Motor neuron (in vitro differentiated cells): ENCODE measurements at regions of chr12 and their contacts with region 1.

Region 1: GRCh38 chr12:12356886-12357718 is at the start of gene BORCS5:
- ATAC-seq: peak; percentile 83 to 96 (median 94)
- H3K4me3 ChIP-seq: peak within 1 kb of the TSS; percentile 62 to 93 (median 86)
- H3K27ac ChIP-seq: peak within 1 kb of the TSS; percentile 89 to 91
- H3K4me1 ChIP-seq: peaks cover 10 to 13% of the 10 kb centered on the region in 2 donors
- total RNA-seq, gene BORCS5: 7.7 to 28.2 (median 17.8) TPM

Region 2: GRCh38 chr12:11780521-11781101 is 576.5 kb before region 1 on chr12:
- in situ Hi-C with region 1: no loop called
- ATAC-seq: no peak
- H3K4me3 ChIP-seq: no peak overlapping the region
- H3K27ac ChIP-seq: no peak overlapping the region
- H3K4me1 ChIP-seq: peaks cover 24% of the 10 kb centered on the region in 2 donors

Region 3: GRCh38 chr12:12319451-12320183 is 37.5 kb before region 1 on chr12:
- in situ Hi-C with region 1: no loop called
- ATAC-seq: peak in 4 of 8 experiments; percentile 18 to 81 (median 36)
- H3K4me3 ChIP-seq: no peak overlapping the region
- H3K27ac ChIP-seq: no peak overlapping the region
- H3K4me1 ChIP-seq: peaks cover 6 to 11% of the 10 kb centered on the region in 2 donors

Region 4: DNA sequence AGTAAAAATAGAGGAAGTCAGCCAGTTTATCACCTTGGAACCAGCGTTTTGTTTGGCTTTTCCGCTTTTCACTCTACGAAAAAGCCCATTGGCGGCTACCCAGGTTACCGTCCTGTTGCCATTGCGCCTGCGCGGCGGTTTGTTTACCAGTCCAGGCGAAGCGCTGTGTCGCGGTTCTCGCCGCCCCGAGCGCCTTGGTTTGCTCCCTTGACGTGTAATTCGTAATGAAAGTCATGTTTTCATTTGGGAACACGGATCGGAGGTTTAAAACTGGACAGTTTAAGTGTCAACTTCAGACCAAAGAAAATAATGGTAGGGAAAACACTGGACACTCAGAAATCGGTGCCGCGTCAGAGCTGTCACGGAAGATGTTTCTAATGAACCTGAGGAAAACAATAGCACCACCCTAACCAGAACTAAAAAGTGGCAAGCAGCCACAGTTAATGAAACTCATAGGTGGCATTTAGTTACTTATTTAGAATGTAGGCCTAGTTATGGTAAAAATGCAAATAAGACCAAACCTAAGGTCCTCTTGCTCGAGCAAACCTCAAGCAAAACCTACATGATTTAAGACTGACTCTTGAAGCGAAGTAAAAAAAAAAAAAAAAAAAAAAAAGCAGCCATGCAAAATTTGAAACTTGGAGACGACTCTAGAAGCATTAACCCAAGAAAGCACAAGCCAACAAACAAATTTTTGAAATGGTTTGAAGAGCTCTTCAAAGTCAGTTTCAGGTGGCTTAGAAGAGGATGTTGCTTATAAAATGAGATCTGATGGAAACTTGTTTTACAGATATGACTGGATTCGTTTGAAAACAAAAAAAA is 339.7 kb after region 1 on chr12:
- in situ Hi-C with region 1: loop called in 3 of 9 experiments (anchors 25 kb)
- ATAC-seq: peak; percentile 89 to 98 (median 95)
- H3K4me3 ChIP-seq: peak overlapping the region; percentile 53 to 91 (median 84)
- H3K27ac ChIP-seq: peak overlapping the region; percentile 93
- H3K4me1 ChIP-seq: peaks cover 5 to 6% of the 10 kb centered on the region in 2 donors

Region 5: GRCh38 chr12:12724661-12725545 is 367.8 kb after region 1 on chr12:
- in situ Hi-C with region 1: loop called in 2 of 9 experiments (anchors 25 kb)
- ATAC-seq: peak; percentile 76 to 82 (median 78)
- H3K4me3 ChIP-seq: peak overlapping the region; percentile 57 to 77 (median 63)
- H3K27ac ChIP-seq: peak overlapping the region; percentile 92 to 95
- H3K4me1 ChIP-seq: peaks cover 0 to 2% of the 10 kb centered on the region in 2 donors

Region 6: DNA sequence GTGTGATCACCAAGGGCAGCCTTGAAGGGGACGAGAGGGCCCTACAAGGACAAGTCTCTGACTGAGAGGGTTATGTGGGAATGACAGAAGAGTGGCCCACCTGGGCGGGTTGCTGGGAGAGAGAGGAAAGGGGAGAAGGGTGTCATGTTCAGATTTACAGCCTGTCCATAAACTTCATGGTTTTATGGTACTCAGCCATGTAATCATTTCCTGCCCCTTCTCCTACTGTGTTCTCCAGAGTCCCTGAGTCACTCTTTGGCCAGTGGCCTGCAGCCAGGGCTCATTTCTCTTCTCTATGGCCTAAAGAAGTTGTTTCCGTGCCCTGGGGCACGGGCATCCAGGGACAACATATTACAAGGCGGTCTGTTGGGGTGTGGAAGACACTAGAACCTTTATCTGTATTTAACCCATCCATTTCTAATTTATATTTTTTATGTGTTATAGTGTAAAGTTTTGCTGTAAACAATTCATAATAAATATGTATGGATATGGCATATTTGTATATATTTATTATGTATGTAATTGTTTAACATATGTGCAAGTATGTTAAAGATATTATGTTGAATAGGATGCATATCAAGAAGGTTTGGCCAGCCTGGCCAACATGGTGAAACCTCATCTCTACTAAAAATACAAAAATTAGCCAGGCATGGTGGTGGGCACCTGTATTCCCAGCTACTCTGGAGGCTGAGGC is 482.9 kb after region 1 on chr12:
- in situ Hi-C with region 1: no loop called
- ATAC-seq: peak in 3 of 8 experiments; percentile 76 to 91 (median 90)
- H3K4me3 ChIP-seq: no peak overlapping the region
- H3K27ac ChIP-seq: no peak overlapping the region
- H3K4me1 ChIP-seq: no peaks in the 10 kb centered on the region